H1 (cell line): ENCODE measurements at regions of chr9 and their contacts with region 1.

Region 1: GRCh38 chr9:132546148-132547051 is 36.0 kb upstream of the BARHL1 start:
- DNase-seq: peak; percentile 34 to 90
- H3K4me3 ChIP-seq: peak overlapping the region; percentile 8 to 55 (median 46); a peak in 7 of 8 replicates
- H3K27ac ChIP-seq: no peak overlapping the region
- H3K4me1 ChIP-seq: peaks cover 0 to 4% (median 4%) of the 10 kb centered on the region in 4 experiments; a peak in 4 of 7 replicates
- H3K27me3 ChIP-seq: no peaks in the 10 kb centered on the region; a peak in 1 of 7 replicates
- CTCF ChIP-seq: peak; percentile 65 to 78 (median 72)
- EP300 ChIP-seq: no peak
- POLR2A ChIP-seq: no peak
- RAD21 ChIP-seq: peak; percentile 30 to 49

Region 2: DNA sequence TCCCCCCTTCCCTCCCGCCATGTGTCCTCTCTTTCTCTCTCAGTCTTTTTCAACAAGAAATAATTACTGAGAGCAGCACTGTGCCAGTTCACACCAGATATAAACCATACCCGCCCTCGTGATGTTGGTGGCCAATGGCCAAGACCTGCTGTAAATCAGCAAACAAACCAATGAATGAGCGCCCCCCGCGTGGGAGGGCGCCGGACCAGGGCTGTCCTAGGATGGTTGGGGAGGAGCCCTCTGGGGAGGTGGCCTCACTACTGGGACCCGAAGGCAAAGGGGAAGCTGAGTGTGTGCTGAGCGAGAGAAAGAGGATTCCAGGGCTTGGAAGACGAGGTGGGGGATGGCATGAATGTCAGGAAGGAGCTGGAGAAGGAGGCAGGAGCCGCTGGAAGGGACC is 15.2 kb before region 1 on chr9:
- CTCF ChIA-PET with region 1: interaction called, 20 read pairs
- POLR2A ChIA-PET with region 1: no interaction called
- DNase-seq: no peak
- H3K4me3 ChIP-seq: no peak overlapping the region
- H3K27ac ChIP-seq: no peak overlapping the region
- H3K4me1 ChIP-seq: no peaks in the 10 kb centered on the region
- H3K27me3 ChIP-seq: no peaks in the 10 kb centered on the region
- CTCF ChIP-seq: no peak
- EP300 ChIP-seq: no peak
- POLR2A ChIP-seq: no peak
- RAD21 ChIP-seq: no peak

Region 3: GRCh38 chr9:132560616-132561202 is 14.3 kb after region 1 on chr9:
- CTCF ChIA-PET with region 1: no interaction called
- POLR2A ChIA-PET with region 1: no interaction called
- DNase-seq: no peak
- H3K4me3 ChIP-seq: no peak overlapping the region
- H3K27ac ChIP-seq: no peak overlapping the region
- H3K4me1 ChIP-seq: peaks cover 0 to 3% (median 0%) of the 10 kb centered on the region in 4 experiments; a peak in 1 of 7 replicates
- H3K27me3 ChIP-seq: no peaks in the 10 kb centered on the region
- CTCF ChIP-seq: no peak
- EP300 ChIP-seq: no peak
- POLR2A ChIP-seq: no peak
- RAD21 ChIP-seq: no peak

Region 4: DNA sequence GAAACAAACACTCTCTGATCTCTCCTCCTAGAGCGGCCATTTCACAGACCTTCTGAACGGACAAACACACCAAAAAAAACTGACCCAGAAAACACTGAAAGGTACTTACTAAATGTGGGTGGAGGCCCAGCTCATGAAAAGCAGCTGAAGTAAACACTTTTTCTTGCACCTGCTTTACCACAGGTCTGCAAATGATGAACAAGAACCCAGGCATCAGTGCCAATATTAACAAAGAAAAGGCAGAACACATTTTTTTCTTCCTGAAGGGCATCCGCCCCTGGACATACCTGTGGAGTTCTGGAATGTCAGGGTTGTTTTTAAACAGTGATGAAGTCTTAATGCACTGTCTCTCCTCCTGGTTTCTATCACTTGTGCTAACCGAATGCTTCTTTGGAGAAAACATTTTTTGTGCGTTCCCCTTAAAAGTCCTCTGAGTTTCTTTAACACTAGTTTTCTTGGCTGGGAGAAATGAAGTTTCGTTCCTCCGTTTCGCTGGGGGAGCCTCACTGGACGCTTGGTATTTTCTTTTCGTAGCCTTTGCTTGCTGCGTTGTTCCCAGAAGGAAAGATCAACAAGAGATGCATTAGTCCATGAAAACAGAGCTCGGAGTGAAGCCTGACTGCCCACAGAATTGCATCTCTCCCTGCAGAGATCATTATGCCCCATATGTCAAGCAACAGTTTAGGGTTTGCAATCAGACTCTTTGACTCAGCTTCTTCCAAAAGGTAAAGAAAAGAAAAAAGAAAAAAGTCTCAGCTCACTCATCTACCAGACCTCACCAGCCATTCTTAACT is 115.9 kb after region 1 on chr9:
- CTCF ChIA-PET with region 1: no interaction called
- POLR2A ChIA-PET with region 1: no interaction called
- DNase-seq: no peak
- H3K4me3 ChIP-seq: peak overlapping the region in 1 of 4 experiments; percentile 11; a peak in 1 of 8 replicates
- H3K27ac ChIP-seq: no peak overlapping the region
- H3K4me1 ChIP-seq: peaks cover 2 to 6% (median 5%) of the 10 kb centered on the region in 4 experiments; a peak in 5 of 7 replicates
- H3K27me3 ChIP-seq: no peaks in the 10 kb centered on the region
- CTCF ChIP-seq: no peak
- EP300 ChIP-seq: no peak
- POLR2A ChIP-seq: no peak
- RAD21 ChIP-seq: no peak

Region 5: DNA sequence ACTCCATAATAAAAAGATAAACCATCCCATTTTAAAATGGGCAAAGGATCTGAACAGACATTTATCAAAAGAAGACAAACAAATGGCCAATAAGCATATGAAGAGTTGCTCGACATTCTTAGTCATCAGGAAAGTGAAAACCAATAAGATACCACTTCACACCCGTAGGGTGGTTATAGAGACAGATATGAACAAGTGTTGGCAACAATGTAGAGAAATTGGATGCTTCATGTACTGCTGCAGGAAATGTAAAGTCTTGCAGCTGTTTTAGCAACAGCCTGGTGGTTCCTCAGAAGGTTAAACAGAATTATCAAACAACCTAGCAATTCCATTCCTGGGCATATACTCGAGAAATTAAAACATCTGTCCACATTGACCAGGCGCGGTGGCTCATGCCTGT is 166.4 kb after region 1 on chr9:
- CTCF ChIA-PET with region 1: no interaction called
- POLR2A ChIA-PET with region 1: no interaction called
- DNase-seq: no peak
- H3K4me3 ChIP-seq: no peak overlapping the region
- H3K27ac ChIP-seq: no peak overlapping the region
- H3K4me1 ChIP-seq: no peaks in the 10 kb centered on the region
- H3K27me3 ChIP-seq: no peaks in the 10 kb centered on the region
- CTCF ChIP-seq: no peak
- EP300 ChIP-seq: no peak
- POLR2A ChIP-seq: no peak
- RAD21 ChIP-seq: no peak